Activated CD4-positive, alpha-beta T cell treated with anti-CD3 and anti-CD28 coated beads, Interleukin-2, amount 10 ng/mL, durations not matched to agents 24 days and 14 days (primary cell): ENCODE measurements at regions of chr15 and their contacts with region 1.

Region 1: GRCh38 chr15:60478566-60479360 is at the start of gene ICE2:
- DNase-seq: peak; percentile 99
- H3K4me3 Mint-ChIP-seq: peak within 1 kb of the TSS; percentile 95
- H3K27ac Mint-ChIP-seq: peak within 1 kb of the TSS; percentile 99
- H3K4me1 Mint-ChIP-seq: peaks cover 37% of the 10 kb centered on the region
- H3K27me3 Mint-ChIP-seq: no peaks in the 10 kb centered on the region
- total RNA-seq, gene ICE2: 55.4 and 62.6 TPM in 2 replicates

Region 2: DNA sequence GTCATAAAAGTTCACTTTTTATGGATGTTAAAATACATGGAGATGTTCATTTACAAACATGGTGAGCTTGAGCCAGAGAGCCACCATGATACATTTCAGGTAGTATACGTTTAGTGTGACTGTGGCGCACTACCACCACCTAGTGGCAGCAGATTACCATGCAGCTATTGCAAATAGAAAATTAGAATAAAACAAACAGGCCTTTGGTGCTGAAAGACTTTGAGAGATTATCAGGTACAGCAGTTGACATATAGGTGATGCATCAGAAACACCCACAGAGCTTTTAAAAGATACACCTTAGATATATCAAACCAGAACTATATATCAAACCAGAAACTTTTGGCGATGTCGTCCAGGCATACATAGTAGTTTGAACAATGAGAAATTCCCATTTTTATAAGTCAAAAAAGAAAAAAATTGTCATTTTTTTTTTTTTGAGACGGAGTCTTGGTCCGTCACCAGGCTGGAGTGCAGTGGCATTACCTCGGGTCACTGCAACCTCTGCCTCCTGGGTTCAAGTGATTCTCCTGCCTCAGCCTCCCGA is 42.1 kb after region 1 on chr15:
- intact Hi-C with region 1: loop called (anchors 1 kb)
- DNase-seq: peak; percentile 93
- H3K4me3 Mint-ChIP-seq: peak overlapping the region; percentile 8
- H3K27ac Mint-ChIP-seq: peak overlapping the region; percentile 59
- H3K4me1 Mint-ChIP-seq: peaks cover 36% of the 10 kb centered on the region
- H3K27me3 Mint-ChIP-seq: no peaks in the 10 kb centered on the region

Region 3: DNA sequence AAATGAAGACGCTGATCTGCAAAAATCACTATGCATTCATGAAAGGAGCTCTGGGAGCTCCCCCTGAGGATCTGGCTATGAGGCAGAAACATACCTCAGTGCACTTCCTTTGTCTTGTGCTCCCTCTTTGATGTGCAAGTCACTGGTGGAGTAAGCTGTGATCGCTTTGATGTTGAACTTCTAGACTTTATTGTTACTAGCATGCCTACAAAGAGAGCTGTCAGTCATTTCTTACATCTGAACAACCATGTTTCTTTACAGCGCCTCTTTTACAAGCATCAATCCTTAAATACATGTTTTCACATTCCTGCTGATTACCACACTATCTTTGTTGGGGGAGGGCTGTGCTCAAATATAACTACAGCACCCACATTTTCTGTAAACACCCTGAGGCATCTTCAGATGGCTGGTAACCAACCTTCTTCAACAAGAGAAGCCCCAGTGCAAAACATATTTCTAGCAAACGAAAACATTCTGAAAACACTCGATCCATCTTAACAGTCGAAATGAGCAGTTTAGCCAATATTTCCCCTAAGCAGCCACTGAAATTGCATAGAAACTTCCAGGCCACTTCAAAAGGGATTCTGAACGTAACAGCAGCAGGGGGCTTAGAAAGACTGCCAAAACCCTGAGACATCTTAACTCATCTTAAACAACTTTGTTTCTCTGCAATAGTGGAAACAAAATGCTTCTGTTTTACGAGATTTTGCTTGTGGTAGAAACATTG is 102.0 kb after region 1 on chr15:
- intact Hi-C with region 1: loop called (anchors 1 kb)
- DNase-seq: peak; percentile 88
- H3K4me3 Mint-ChIP-seq: peak overlapping the region; percentile 73
- H3K27ac Mint-ChIP-seq: peak overlapping the region; percentile 94
- H3K4me1 Mint-ChIP-seq: peaks cover 71% of the 10 kb centered on the region
- H3K27me3 Mint-ChIP-seq: no peaks in the 10 kb centered on the region

Region 4: DNA sequence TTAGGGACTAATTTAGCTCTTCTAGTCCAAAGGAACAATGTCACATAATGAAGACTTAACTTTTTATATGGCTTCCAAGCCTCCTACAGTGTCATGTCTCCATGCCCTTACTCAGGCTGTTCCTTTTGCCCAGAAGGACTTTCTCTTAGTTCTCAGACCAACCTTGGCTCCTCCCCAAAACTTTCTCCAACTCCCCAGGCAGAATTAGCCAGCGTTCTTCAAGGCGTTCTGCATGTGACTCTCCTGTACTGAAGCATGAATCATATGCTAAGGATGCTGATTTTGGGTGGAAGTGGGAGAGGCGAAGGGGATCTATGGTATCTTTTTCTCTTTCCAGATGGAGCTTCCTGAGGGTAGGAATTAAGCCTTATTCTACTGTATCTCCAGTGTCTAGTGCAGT is 335.3 kb after region 1 on chr15:
- intact Hi-C with region 1: no loop called
- DNase-seq: no peak
- H3K4me3 Mint-ChIP-seq: no peak overlapping the region
- H3K27ac Mint-ChIP-seq: peak overlapping the region; percentile 13
- H3K4me1 Mint-ChIP-seq: peaks cover 9% of the 10 kb centered on the region
- H3K27me3 Mint-ChIP-seq: peaks cover 4% of the 10 kb centered on the region